Activated CD4-positive, alpha-beta T cell treated with anti-CD3 and anti-CD28 coated beads, Interleukin-2, amount 10 ng/mL, durations not matched to agents 7 days and 5 days (primary cell): ENCODE measurements at regions of chr1 and their contacts with region 1.

Region 1: GRCh38 chr1:161071886-161072371 is 2.2 kb upstream of the ARHGAP30 start:
- DNase-seq: peak; percentile 63
- H3K4me3 Mint-ChIP-seq: no peak overlapping the region
- H3K27ac Mint-ChIP-seq: peak overlapping the region; percentile 43
- H3K4me1 Mint-ChIP-seq: peaks cover 51% of the 10 kb centered on the region
- H3K27me3 Mint-ChIP-seq: no peaks in the 10 kb centered on the region

Region 2: GRCh38 chr1:161045750-161046571 is 26.0 kb before region 1 on chr1 and contains the start of gene USF1:
- CTCF ChIA-PET with region 1: interaction called, 50 read pairs
- POLR2A ChIA-PET with region 1: interaction called, 6 read pairs
- DNase-seq: peak; percentile 95
- H3K4me3 Mint-ChIP-seq: peak within 1 kb of the TSS; percentile 79
- H3K27ac Mint-ChIP-seq: peak within 1 kb of the TSS; percentile 97
- H3K4me1 Mint-ChIP-seq: peaks cover 49% of the 10 kb centered on the region
- H3K27me3 Mint-ChIP-seq: no peaks in the 10 kb centered on the region
- total RNA-seq, gene USF1: 78.0 to 81.2 TPM

Region 3: GRCh38 chr1:161082991-161083742 is 11.2 kb after region 1 on chr1:
- CTCF ChIA-PET with region 1: interaction called, 88 read pairs
- POLR2A ChIA-PET with region 1: no interaction called
- DNase-seq: no peak
- H3K4me3 Mint-ChIP-seq: no peak overlapping the region
- H3K27ac Mint-ChIP-seq: no peak overlapping the region
- H3K4me1 Mint-ChIP-seq: no peaks in the 10 kb centered on the region
- H3K27me3 Mint-ChIP-seq: no peaks in the 10 kb centered on the region